ENCODE measurements at regions of chr12 and their contacts with region 1.

Region 1: GRCh38 chr12:80946594-80946993 is 8.9 kb upstream of the LIN7A start:
- DNase-seq: no peak
- ATAC-seq: no peak

Region 2: GRCh38 chr12:80412369-80412953 is 534.1 kb before region 1 on chr12:
- intact Hi-C with region 1: loop called (anchors 10 kb)
- DNase-seq: no peak
- ATAC-seq: peak; percentile 37

Measured in left ventricle myocardium superior (tissue), 1 donor.